Caco-2 (cell line): ENCODE measurements at regions of chr10 and their contacts with region 1.

Region 1: DNA sequence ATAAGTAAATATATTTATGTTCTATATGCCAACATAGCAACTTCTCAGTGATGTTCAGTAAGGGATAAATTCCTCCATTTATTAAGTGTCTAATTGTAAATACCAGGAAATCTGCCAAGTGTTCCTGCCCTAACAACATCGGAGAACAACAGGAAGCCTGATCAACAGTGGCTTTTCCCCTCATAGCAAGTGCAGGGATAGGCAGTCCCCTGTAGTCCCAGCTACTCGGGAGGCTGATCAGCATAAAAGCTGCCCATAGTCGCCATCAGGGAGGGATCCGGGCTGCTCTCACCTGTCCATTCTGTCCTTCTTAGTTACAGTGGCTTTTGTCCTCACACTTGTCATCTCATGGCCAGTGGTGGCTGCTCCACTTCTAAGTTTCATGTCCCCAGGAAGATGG is 141.3 kb downstream of the IDE start:
- DNase-seq: no peak
- H3K4me3 ChIP-seq: no peak overlapping the region
- H3K4me3 Mint-ChIP-seq: no peak overlapping the region
- H3K27ac Mint-ChIP-seq: no peak overlapping the region
- H3K4me1 ChIP-seq: no peaks in the 10 kb centered on the region
- H3K4me1 Mint-ChIP-seq: no peaks in the 10 kb centered on the region
- H3K27me3 ChIP-seq: no peaks in the 10 kb centered on the region
- H3K27me3 Mint-ChIP-seq: no peaks in the 10 kb centered on the region
- CTCF ChIP-seq: no peak

Region 2: DNA sequence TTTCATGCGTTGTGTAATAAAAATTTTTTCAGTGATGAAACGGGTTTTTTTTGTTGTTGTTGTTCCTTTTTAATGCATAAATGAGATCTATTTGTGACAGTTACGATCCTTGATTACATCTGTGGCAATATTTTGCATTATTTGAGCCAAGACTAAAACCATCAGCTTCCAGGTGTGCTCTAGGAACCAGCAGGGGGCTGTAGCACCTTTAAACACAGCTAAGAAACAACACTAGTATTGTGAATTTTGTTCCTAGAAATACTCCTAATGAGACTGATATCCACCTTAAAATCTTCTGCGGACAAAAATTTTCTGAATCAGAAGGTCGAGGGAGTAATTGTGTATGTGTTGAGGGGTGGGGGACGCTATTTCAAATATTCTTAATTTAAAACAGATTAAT is 576.0 kb before region 1 on chr10:
- CTCF ChIA-PET with region 1: no interaction called
- POLR2A ChIA-PET with region 1: no interaction called
- intact Hi-C with region 1: loop called (anchors 2 kb)
- DNase-seq: peak in 1 of 2 experiments; percentile 33
- H3K4me3 ChIP-seq: no peak overlapping the region
- H3K4me3 Mint-ChIP-seq: no peak overlapping the region
- H3K27ac Mint-ChIP-seq: no peak overlapping the region
- H3K4me1 ChIP-seq: no peaks in the 10 kb centered on the region
- H3K4me1 Mint-ChIP-seq: no peaks in the 10 kb centered on the region
- H3K27me3 ChIP-seq: no peaks in the 10 kb centered on the region
- H3K27me3 Mint-ChIP-seq: no peaks in the 10 kb centered on the region
- CTCF ChIP-seq: peak; percentile 37 to 77

Region 3: GRCh38 chr10:92290837-92291615 is 141.6 kb before region 1 on chr10 and contains the starts of genes CPEB3 and MARCHF5:
- CTCF ChIA-PET with region 1: interaction called, 6 read pairs
- POLR2A ChIA-PET with region 1: no interaction called
- intact Hi-C with region 1: loop called (anchors 1 kb)
- DNase-seq: peak; percentile 97 to 98
- H3K4me3 ChIP-seq: peak within 1 kb of the TSS; percentile 100
- H3K4me3 Mint-ChIP-seq: peak within 1 kb of the TSS; percentile 97
- H3K27ac Mint-ChIP-seq: peak within 1 kb of the TSS; percentile 92
- H3K4me1 ChIP-seq: peaks cover 7% of the 10 kb centered on the region; the same call in 1 of the 2 replicates
- H3K4me1 Mint-ChIP-seq: no peaks in the 10 kb centered on the region
- H3K27me3 ChIP-seq: no peaks in the 10 kb centered on the region
- H3K27me3 Mint-ChIP-seq: no peaks in the 10 kb centered on the region
- CTCF ChIP-seq: peak; percentile 56 to 81
- total RNA-seq, gene CPEB3: 2.3 TPM in 2 replicates
- total RNA-seq, gene MARCHF5: 30.4 and 33.9 TPM in 2 replicates

Region 4: DNA sequence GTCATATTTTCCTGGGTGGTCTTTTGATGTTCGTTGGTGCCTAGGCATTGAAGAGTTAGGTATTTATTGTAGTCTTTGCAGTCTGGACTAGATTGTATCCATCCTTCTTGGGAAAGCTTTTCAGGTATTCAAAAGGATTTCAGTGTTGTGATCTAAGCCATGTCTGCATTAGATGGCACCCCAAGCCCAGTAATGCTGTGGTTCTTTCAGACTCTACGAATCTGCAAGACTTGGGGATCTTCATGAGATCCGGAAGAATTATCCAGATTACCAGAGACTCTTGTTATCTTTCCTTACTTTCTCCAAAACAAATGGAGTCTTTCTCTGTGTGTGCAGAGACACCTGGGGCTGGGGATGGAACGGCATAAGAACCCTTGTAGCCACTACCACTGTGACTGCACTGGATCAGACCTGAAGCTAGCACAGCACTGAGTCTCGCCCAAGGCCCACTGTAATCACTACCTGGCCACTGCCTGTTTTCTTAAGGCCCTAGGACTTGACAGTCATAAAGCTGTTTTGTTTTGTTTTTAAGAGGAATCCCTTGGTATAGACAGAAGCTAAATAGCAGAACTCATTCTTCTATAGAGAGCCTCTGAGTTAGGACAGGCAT is 66.1 kb before region 1 on chr10:
- CTCF ChIA-PET with region 1: no interaction called
- POLR2A ChIA-PET with region 1: no interaction called
- intact Hi-C with region 1: loop called (anchors 10 kb)
- DNase-seq: no peak
- H3K4me3 ChIP-seq: no peak overlapping the region
- H3K4me3 Mint-ChIP-seq: no peak overlapping the region
- H3K27ac Mint-ChIP-seq: no peak overlapping the region
- H3K4me1 ChIP-seq: no peaks in the 10 kb centered on the region
- H3K4me1 Mint-ChIP-seq: no peaks in the 10 kb centered on the region
- H3K27me3 ChIP-seq: no peaks in the 10 kb centered on the region
- H3K27me3 Mint-ChIP-seq: peaks cover 4% of the 10 kb centered on the region
- CTCF ChIP-seq: no peak